Colonic mucosa (tissue), 4 donors: ENCODE measurements at regions of chr12 and their contacts with region 1.

Region 1: DNA sequence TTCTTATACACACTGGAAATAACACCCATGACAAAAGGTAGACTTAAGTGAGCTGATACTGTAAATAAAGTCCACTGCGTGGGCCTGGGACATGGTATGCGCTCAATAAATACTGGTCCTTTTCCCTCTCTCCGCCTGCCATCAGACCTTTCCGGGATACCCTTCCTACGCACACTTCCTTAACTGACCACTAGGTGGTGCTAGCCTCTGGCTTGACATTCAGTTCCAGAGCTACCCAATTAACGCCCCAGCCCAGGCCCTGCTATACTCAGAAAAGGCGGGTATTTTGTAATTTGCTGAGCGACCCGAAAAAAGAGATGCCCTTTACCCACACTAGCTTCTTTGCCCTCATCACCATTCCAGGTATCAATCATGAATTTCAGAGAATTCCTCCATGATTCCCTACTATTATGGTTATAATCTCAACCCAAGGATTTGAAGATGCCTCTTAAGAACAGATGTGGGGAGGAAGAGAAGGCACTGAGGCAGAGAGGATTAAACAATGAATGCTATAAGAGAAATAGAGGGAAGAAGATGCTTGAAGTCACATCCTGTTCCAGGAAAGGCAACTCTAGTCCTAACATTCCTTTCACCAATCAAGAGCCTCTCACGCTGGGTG is 3.9 kb upstream of the LRP1 start:
- DNase-seq: peak; percentile 89
- H3K4me3 ChIP-seq: no peak overlapping the region
- H3K27ac ChIP-seq: no peak overlapping the region
- H3K4me1 ChIP-seq: peaks cover 5% of the 10 kb centered on the region
- H3K27me3 ChIP-seq: no peaks in the 10 kb centered on the region
- CTCF ChIP-seq: peak; percentile 96

Region 2: DNA sequence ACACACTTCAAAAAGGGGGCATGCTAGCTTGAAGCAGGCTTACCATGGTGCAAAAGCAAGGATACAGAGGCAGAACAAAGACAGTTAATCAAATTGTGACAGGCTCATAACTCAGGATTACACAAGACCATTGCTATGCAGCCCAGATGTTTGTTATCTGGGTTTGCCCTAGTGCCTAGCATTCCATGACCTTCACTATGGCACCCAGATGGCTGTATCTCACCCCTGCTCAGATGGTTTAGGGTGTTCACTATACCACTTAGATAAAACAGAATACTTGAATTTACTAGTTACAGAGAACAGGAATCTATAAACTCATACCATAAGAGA is 246.4 kb before region 1 on chr12:
- intact Hi-C with region 1: no loop called
- DNase-seq: no peak
- H3K4me3 ChIP-seq: no peak overlapping the region
- H3K27ac ChIP-seq: no peak overlapping the region
- H3K4me1 ChIP-seq: no peaks in the 10 kb centered on the region
- H3K27me3 ChIP-seq: no peaks in the 10 kb centered on the region
- CTCF ChIP-seq: no peak

Region 3: DNA sequence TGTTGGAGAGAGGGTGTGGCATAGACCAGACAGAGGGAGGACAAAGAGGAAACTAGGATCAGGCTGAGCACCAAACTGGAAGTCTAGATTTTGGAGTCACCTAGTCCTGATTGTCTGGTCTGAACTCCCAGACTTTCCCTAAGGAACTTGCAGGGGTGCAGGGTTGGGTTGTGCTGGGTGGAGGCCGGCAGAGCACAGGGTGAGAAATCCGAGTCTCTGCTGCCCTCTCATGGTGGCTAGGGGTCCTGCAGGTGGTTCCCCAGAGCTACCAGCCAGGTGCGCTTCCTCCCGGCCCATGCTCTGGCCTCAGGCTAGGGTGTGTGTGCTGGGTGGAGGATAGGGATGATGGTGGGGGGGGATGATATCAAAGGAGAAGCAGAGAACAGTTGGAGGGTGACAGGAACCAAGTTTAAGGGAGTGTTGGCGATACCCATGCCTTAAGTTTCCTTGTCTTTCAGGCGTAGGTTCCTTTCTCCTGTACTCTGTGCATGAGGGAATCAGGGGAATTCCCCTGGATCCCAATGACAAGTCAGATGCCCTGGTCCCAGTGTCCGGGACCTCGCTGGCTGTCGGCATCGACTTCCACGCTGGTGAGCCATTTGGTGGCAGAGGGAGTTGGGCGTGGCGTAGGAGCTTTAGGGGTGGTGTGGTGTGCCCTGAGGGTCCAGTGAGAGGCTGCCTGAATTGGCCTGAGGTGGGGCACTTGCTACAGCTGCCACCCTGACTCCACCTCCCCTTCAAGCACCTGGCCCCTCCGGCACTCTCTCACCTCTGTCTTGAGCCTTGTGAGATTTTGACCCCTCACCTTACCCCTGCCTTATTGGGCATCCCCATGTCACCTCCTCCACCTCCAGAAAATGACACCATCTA is 58.8 kb after region 1 on chr12:
- intact Hi-C with region 1: loop called (anchors 2 kb)
- DNase-seq: peak; percentile 84
- H3K4me3 ChIP-seq: no peak overlapping the region
- H3K27ac ChIP-seq: no peak overlapping the region
- H3K4me1 ChIP-seq: no peaks in the 10 kb centered on the region
- H3K27me3 ChIP-seq: no peaks in the 10 kb centered on the region
- CTCF ChIP-seq: peak; percentile 76

Region 4: GRCh38 chr12:57541001-57541400 is 416.6 kb after region 1 on chr12:
- intact Hi-C with region 1: no loop called
- DNase-seq: no peak
- H3K4me3 ChIP-seq: no peak overlapping the region
- H3K27ac ChIP-seq: peak overlapping the region; percentile 49
- H3K4me1 ChIP-seq: peaks cover 11% of the 10 kb centered on the region
- H3K27me3 ChIP-seq: no peaks in the 10 kb centered on the region
- CTCF ChIP-seq: no peak